ENCODE measurements at regions of chr14 and their contacts with region 1.

Region 1: DNA sequence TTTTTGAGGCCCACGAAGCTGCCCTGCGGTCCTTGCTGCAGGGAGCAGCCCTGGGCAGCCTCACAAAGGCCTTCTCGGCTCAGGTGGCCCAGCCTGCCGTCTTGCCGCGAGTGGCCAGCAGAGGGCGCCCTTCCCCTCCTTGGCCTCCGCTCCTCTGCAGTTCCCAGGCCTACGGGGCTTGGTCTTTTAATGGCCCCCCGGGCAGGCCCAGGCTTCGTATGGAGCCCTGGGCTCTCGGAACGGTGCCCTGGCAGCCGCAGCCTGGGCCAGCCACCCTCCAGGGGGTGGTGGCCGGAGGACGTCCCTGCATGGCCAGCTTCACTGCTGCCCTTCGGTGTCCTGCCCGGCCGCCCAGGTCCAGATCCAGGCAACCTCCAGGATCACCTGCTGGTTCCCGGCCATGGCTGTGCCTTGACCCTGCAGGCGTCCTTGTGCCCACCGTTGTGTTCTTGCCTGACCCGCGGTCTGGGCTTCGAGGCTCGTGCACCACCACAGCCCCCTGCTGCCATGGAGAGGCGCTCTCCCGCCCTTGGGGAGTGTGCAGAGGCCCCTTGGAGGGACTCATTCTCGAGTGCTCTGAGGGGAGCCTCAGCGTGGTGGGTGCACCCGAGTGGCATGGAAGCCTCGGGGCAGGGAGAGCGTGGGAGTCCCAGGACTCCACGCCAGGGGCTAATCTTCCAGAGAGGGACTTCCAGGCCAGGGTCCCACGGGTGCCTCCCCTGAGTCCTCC is 9.4 kb downstream of the ASPG start:
- DNase-seq: no peak
- H3K4me3 ChIP-seq: no peak overlapping the region
- CTCF ChIP-seq: peak; percentile 90

Region 2: DNA sequence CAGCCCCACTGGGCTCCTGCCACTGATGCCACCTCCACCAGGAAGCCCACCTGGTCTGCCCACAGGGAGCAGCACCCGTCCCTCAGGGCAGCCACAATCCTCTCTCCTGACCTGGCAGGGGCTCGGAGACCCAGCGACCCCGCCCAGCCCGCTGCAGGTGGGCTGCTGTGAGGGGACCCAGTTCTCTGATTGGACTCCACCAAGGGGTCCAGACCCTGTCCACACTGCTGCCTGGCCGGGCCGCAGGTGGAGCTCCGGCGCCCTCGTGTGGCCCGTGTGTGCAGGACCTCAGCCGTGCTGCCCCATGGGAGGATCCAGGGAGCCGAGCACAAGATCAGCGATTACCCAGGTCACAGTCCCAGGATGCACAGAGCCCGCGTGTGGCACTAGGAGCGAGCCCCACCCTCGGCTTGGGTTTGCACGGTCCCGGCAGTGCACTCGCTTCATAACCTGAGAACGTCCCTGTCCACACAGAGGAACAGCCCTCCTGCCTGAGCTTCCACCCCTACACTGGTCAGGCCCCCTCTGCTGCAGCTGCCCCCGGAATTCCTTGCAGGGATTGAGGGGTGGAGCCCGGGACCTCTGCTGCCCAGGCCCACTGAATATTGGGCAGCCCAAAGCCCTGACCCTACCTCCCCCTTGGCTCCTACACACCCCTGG is 545.1 kb after region 1 on chr14:
- CTCF ChIA-PET with region 1: interaction called, 18 read pairs
- POLR2A ChIA-PET with region 1: no interaction called
- DNase-seq: no peak
- H3K4me3 ChIP-seq: no peak overlapping the region
- CTCF ChIP-seq: peak; percentile 99

Measured in AG04449 (cell line).